Posterior vena cava (tissue), 2 donors: ENCODE measurements at regions of chr5 and their contacts with region 1.

Region 1: DNA sequence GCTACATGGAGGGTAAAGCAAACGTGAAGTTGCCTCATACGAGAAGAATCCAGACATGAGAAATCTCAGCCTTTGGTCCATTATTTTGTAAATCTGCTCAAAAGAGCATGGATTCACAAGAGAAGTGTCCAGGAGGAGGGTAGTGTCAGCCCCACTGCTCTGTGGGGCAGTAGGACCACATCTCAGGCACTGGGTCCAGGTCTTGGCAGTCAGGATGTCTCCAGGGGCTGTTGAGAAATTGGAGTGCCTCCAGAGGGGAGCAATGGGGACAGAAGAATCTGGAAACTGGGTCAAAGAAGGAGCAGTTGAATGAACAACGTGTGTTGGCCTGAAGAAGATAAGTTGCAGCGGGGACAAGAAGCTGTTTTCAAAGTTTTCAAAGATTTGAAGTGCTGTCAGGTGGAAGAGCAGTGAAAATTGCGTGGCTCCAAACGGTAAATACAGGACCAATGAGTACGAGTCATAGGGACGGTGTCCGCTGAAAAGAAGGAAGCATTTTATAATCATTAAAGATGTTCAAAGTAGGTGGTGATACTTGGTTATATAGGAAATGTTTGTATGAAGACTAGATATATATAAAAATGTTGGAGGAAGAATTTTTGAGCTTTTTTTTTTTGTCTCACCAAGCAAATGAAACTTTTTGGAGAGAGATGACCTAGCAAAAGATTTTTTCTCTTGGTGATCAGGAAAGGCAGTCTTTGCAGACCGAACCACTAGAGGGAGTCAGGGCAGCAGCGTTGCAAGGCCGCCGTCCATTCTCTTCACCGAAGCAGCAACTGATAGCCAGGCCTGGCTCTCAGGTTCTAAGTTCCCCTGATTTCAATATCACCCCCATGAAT is 57.1 kb upstream of the ZBED3 start:
- DNase-seq: peak; percentile 87

Region 2: DNA sequence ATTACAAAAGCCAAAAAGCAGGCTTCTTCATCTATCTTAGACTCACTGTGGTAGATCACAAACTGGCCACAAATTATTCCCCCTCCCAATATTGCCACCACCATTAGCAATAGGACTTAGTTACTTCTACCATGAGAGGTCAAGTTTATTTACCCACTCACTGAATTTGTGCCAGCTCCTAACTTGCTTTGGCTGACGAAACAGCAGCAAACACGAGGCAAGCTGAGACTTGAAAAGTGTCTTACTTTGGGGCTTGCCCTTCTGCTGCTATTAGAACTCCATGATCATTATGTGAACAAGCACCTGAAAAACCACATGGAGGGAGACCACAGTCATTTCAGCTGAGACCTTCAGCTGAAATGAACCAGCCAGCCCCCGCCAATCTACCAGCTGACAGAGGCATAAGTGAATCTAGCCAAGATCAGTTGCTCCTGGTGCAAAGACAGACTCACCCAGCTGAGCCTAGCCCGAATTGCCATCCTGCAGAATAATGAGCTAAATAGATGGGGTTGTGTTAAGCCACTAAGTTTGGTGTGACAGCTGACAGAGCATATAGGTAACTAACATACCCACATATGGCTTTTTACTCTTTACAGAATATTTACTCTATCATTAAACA is 342.2 kb after region 1 on chr5:
- intact Hi-C with region 1: loop called (anchors 10 kb)
- DNase-seq: peak; percentile 40